ENCODE measurements at regions of chr2 and their contacts with region 1.

Region 1: GRCh38 chr2:108533832-108534583 is at the start of gene LIMS1:
- DNase-seq: peak; percentile 92
- H3K4me3 Mint-ChIP-seq: peak within 1 kb of the TSS; percentile 95
- H3K27ac Mint-ChIP-seq: peak within 1 kb of the TSS; percentile 91
- H3K4me1 Mint-ChIP-seq: peaks cover 37% of the 10 kb centered on the region
- H3K27me3 Mint-ChIP-seq: no peaks in the 10 kb centered on the region
- total RNA-seq, gene LIMS1: 102 to 104 TPM

Region 2: GRCh38 chr2:108492364-108492763 is 41.6 kb before region 1 on chr2:
- CTCF ChIA-PET with region 1: no interaction called
- POLR2A ChIA-PET with region 1: no interaction called
- intact Hi-C with region 1: loop called (anchors 5 kb)
- DNase-seq: no peak
- H3K4me3 Mint-ChIP-seq: no peak overlapping the region
- H3K27ac Mint-ChIP-seq: peak overlapping the region; percentile 68
- H3K4me1 Mint-ChIP-seq: peaks cover 17% of the 10 kb centered on the region
- H3K27me3 Mint-ChIP-seq: no peaks in the 10 kb centered on the region

Region 3: DNA sequence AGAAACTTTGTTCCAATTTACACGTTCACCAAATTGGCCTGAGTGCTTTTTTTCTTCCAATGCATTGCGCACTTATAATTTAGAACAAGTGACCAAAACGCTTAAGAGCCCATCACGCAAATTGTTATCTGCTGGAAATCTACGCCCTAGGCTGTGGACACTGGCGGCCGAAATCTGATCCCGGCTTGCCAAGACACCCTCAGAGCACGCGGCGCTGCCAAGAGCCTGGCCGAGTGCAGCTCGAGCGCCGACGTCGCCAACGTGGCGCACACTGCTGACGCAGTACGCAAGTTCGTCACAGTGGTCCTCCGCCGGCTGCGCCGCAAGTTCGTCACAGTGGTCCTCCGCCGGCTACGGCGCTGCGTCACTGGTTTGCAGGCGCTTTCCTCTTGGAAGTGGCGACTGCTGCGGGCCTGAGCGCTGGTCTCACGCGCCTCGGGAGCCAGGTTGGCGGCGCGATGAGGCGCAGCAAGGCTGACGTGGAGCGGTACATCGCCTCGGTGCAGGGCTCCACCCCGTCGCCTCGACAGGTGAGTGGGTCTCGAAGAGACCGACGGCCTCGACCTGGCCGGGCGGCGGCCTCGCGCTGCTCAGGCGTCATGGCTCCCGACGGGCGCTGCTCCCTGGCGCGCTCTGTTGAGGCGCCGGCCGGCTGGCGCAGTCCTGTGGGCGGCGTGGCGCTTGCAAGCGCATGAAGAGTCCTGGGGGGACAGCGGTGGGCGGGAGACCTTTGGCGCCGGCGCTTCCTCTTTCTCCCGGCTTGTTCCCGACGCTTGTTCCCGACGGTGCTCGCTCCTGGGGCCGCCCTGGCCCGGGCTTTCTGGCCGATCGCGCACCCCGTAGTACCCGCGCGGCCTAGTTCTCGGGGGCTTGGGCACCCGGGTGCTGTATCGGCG is 185.4 kb after region 1 on chr2 and contains the start of gene RANBP2:
- CTCF ChIA-PET with region 1: no interaction called
- POLR2A ChIA-PET with region 1: no interaction called
- intact Hi-C with region 1: loop called (anchors 2 kb)
- DNase-seq: peak; percentile 96
- H3K4me3 Mint-ChIP-seq: peak within 1 kb of the TSS; percentile 93
- H3K27ac Mint-ChIP-seq: peak within 1 kb of the TSS; percentile 98
- H3K4me1 Mint-ChIP-seq: peaks cover 19% of the 10 kb centered on the region
- H3K27me3 Mint-ChIP-seq: no peaks in the 10 kb centered on the region
- total RNA-seq, gene RANBP2: 72.0 to 75.5 TPM